GM10248 (cell line): ENCODE measurements at regions of chr7 and their contacts with region 1.

Region 1: DNA sequence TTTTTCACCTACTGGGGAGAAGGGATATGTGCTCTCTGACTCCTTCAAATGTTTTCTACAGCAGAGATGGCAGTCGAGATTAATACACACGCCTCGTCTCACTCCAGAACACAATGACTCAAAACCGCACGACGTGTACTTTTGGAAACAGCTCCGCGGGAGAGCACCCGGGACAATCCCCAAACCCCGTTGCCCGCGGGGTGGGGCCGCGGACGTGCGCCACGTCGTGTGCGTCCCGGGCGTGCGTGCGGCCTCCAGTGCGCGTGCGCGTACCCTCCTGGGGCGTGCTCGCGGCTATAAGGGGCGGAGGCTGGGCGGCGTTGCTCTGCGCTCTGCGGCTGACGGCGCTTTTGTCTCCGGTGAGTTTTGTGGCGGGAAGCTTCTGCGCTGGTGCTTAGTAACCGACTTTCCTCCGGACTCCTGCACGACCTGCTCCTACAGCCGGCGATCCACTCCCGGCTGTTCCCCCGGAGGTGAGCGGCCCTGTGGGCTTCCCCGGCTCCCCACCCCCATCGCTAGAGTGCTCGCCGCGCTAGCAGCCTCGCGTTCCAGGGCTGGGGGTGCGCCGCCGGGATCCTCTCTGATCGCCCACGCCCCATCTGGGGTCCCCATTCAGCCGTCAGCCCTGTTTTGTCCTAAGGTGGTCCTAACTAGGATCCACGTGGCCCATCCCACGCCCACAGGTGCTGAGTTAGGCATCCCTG is at the start of gene HILPDA:
- DNase-seq: peak; percentile 97
- CTCF ChIP-seq: no peak

Region 2: GRCh38 chr7:127317447-127317961 is 1138.2 kb before region 1 on chr7:
- CTCF ChIA-PET with region 1: no interaction called
- POLR2A ChIA-PET with region 1: no interaction called
- DNase-seq: no peak
- CTCF ChIP-seq: no peak

Region 3: DNA sequence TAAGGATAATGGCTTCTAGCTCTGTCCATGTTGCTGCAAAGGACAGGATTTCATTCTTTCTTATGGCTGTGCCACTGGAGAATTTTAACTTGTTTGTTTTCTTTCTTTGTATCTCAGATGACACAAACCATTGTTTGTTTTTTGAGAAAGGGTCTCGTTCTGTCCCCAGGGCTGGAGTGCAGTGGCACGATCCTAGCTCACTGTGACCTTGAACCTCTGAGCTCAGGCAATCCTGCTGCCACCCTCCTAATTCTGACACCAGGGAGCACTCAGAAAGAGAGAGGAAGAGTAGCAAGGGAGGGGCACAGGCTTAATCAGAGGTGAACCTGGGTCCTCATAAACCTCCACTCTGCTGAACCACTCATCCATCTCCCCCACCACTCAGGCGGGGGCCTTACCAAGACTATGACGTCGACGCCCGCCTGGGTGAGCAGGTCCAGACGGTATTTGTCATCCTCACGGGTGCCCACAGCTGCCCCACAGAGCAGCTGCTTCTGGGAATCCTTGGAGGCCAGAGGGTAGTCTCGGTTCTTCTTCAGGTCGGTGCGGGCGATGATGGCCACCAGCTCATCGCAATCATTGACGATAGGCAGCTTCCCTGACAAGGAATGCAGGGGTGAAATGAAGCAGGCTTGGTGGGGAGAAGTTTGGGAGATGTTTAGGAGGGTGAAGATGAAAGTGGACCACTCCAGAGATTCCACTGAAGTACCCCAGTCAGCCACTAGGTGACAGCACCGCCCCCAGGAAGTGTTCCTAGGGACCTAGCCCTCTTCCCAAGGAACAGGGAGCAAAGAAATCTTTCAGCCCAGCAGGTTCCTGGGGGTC is 57.5 kb before region 1 on chr7:
- CTCF ChIA-PET with region 1: interaction called, 26 read pairs
- POLR2A ChIA-PET with region 1: no interaction called
- DNase-seq: peak; percentile 58
- CTCF ChIP-seq: peak; percentile 70

Region 4: GRCh38 chr7:128409596-128410160 is 46.0 kb before region 1 on chr7 and contains the start of gene IMPDH1:
- CTCF ChIA-PET with region 1: interaction called, 58 read pairs
- POLR2A ChIA-PET with region 1: no interaction called
- DNase-seq: peak; percentile 96
- CTCF ChIP-seq: no peak

Region 5: DNA sequence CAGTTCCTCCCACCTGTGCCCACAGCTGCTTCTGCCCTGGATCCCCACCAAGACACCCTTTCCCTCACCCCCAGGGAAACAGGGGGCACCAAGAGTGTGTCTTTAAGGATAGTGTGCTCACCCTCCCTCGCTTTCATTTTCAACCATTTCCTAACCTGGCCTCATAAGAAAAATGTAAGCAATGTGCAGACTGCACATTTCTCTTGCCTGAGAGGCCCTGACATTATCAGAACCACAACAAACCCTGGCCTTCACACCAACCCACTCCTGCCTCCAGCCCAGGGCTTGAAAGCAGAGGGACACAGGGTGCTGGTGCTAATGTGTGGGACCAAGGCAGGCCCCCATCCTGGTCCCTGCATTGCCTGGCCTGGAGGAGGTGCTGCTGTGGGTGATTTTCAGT is 34.9 kb before region 1 on chr7:
- CTCF ChIA-PET with region 1: interaction called, 370 read pairs
- POLR2A ChIA-PET with region 1: no interaction called
- DNase-seq: no peak
- CTCF ChIP-seq: no peak

Region 6: GRCh38 chr7:128425850-128426249 is 29.9 kb before region 1 on chr7:
- CTCF ChIA-PET with region 1: interaction called, 370 read pairs
- POLR2A ChIA-PET with region 1: no interaction called
- DNase-seq: peak; percentile 77
- CTCF ChIP-seq: peak; percentile 91

Region 7: DNA sequence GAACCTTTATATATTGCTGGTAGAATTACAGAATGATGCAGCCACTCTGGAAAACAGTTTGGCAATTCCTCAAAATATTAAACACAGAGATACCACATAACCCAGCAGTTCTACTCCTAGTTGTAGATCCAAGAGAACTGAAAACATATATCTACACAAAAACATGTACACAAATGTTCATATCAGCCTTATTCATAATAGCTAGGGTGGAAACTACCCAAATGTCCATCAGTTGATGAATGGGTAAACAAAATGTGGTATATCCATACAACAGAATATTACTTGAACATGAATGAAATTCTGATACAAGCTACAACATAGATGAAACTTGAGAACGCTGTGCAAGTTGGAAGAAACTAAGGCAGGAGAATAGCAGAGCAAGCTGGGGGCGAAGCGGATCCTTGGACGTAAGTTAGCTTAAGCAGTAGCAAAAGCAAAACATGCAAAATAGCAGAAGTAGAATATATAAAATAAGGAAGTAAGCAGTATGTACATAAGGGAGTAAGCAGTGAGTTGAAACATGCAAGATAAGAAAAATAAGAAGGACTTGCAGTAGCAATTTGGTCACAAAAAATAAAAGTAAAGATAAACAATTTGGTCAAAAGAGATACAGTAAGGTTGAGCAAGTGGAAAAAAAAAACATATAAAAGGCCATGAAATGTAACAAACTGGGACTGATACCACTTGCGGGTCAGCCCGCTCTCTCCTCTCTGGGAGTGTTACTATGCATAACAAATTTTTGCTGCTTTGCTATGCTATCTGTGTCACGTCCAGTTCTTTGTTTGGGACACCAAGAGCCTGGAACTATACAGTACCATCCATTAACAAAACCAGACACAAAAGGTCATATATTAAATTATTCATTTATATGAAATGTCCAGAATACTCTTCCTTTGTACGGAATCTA is 18.0 kb before region 1 on chr7:
- CTCF ChIA-PET with region 1: interaction called, 370 read pairs
- POLR2A ChIA-PET with region 1: interaction called, 3 read pairs
- DNase-seq: peak; percentile 43
- CTCF ChIP-seq: no peak

Region 8: GRCh38 chr7:128443831-128444600 is 11.7 kb before region 1 on chr7:
- CTCF ChIA-PET with region 1: interaction called, 99 read pairs
- POLR2A ChIA-PET with region 1: no interaction called
- DNase-seq: no peak
- CTCF ChIP-seq: no peak

Region 9: DNA sequence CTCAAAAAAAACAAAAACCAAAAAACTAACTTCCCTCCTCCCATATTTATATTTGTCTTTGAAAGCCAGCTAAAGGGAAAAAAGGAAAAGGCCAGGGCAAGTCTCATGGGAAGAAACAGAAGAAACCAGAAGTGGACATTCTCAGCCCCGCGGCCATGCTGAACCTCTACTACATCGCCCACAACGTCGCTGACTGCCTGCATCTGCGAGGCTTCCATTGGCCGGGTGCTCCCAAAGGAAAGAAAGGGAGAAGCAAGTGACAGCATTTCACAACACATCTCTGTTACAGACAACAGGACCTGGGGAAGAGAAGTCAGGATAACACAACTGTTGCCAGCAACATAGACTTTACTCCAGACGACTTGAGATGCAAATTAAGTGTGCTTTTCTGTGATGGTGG is 1056.5 kb after region 1 on chr7:
- CTCF ChIA-PET with region 1: no interaction called
- POLR2A ChIA-PET with region 1: no interaction called
- DNase-seq: no peak
- CTCF ChIP-seq: no peak